Activated B cell treated with CpG ODN at 0.5 μM for 24 hours (primary cell): ENCODE measurements at regions of chrX and their contacts with region 1.

Region 1: GRCh38 chrX:21993265-21993664 is 38.9 kb upstream of the PHEX start:
- DNase-seq: peak; percentile 29
- ATAC-seq: peak; percentile 85
- H3K4me3 Mint-ChIP-seq: peak overlapping the region; percentile 50
- H3K27ac Mint-ChIP-seq: peak overlapping the region; percentile 86
- H3K4me1 Mint-ChIP-seq: peaks cover 55% of the 10 kb centered on the region
- H3K27me3 Mint-ChIP-seq: no peaks in the 10 kb centered on the region
- CTCF ChIP-seq: no peak

Region 2: DNA sequence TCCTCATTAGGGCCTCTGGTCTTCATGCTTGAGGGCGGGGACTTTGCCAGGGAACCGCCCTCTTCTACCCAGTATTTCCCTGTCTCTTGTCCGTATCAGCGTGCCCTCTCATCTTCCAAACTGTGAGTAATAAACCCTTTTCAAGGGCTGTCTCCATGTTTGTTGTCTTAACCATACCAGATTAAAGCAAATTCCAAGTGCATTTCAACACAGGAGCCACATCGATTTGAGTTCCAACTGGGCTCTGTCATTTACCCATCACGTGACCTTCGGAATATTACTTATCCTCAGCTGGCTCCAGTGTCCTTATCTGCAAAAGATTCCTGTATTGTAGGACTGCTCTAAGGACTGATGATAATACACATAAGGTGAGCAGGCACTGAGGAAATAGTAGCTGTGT is 32.5 kb after region 1 on chrX:
- CTCF ChIA-PET with region 1: no interaction called
- POLR2A ChIA-PET with region 1: no interaction called
- intact Hi-C with region 1: loop called (anchors 5 kb)
- DNase-seq: no peak
- ATAC-seq: no peak
- H3K4me3 Mint-ChIP-seq: no peak overlapping the region
- H3K27ac Mint-ChIP-seq: no peak overlapping the region
- H3K4me1 Mint-ChIP-seq: peaks cover 8% of the 10 kb centered on the region
- H3K27me3 Mint-ChIP-seq: no peaks in the 10 kb centered on the region
- CTCF ChIP-seq: no peak

Region 3: DNA sequence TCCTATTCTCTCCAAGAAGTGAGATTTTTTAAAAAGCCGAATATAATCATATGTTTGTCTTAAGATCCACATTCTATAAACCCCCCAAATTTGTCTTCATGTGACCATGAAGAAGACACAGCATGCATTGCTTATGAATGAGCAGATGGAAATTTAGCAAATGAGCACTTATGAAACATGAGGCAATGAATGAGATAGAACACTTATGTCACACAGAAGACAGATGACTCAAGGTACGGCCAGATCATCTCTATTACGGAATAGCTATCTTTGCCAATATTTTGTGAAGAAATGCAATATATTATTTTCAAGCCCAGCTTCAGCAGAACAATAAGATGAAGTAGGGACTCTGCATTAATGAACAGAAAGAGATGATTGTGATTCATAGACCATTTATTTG is 60.2 kb after region 1 on chrX:
- CTCF ChIA-PET with region 1: no interaction called
- POLR2A ChIA-PET with region 1: no interaction called
- intact Hi-C with region 1: loop called (anchors 1 kb)
- DNase-seq: no peak
- ATAC-seq: no peak
- H3K4me3 Mint-ChIP-seq: no peak overlapping the region
- H3K27ac Mint-ChIP-seq: no peak overlapping the region
- H3K4me1 Mint-ChIP-seq: peaks cover 26% of the 10 kb centered on the region
- H3K27me3 Mint-ChIP-seq: no peaks in the 10 kb centered on the region
- CTCF ChIP-seq: no peak

Region 4: DNA sequence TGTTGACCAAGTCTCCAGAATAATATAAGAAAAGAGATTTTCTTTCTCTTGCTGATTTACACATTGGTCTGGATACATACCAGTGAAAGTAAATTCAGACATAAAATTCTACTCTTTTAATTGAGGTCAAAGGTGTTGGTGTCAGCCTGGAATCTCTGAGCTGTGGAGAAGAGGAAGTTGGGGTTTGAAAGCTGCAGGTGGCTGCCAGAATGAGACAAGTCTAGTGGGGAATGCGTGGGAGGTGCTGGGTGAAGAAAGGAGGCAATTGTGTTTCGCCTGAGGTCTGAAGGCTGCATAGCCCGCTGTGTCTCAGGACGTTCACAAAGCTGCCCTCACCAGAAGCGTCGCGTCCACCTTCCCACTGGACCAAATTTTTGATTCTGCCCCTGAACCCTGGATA is 70.0 kb after region 1 on chrX:
- CTCF ChIA-PET with region 1: no interaction called
- POLR2A ChIA-PET with region 1: interaction called, 3 read pairs
- intact Hi-C with region 1: loop called (anchors 1 kb)
- DNase-seq: peak; percentile 25
- ATAC-seq: peak; percentile 90
- H3K4me3 Mint-ChIP-seq: peak overlapping the region; percentile 41
- H3K27ac Mint-ChIP-seq: peak overlapping the region; percentile 80
- H3K4me1 Mint-ChIP-seq: peaks cover 76% of the 10 kb centered on the region
- H3K27me3 Mint-ChIP-seq: no peaks in the 10 kb centered on the region
- CTCF ChIP-seq: no peak

Region 5: GRCh38 chrX:22666441-22666840 is 673.2 kb after region 1 on chrX:
- CTCF ChIA-PET with region 1: no interaction called
- POLR2A ChIA-PET with region 1: no interaction called
- intact Hi-C with region 1: no loop called
- DNase-seq: no peak
- ATAC-seq: no peak
- H3K4me3 Mint-ChIP-seq: no peak overlapping the region
- H3K27ac Mint-ChIP-seq: no peak overlapping the region
- H3K4me1 Mint-ChIP-seq: no peaks in the 10 kb centered on the region
- H3K27me3 Mint-ChIP-seq: no peaks in the 10 kb centered on the region
- CTCF ChIP-seq: no peak

Region 6: GRCh38 chrX:22922961-22923360 is 929.7 kb after region 1 on chrX:
- CTCF ChIA-PET with region 1: no interaction called
- POLR2A ChIA-PET with region 1: no interaction called
- intact Hi-C with region 1: no loop called
- DNase-seq: no peak
- ATAC-seq: no peak
- H3K4me3 Mint-ChIP-seq: no peak overlapping the region
- H3K27ac Mint-ChIP-seq: no peak overlapping the region
- H3K4me1 Mint-ChIP-seq: no peaks in the 10 kb centered on the region
- H3K27me3 Mint-ChIP-seq: no peaks in the 10 kb centered on the region
- CTCF ChIP-seq: no peak